Activated CD8-positive, alpha-beta T cell treated with anti-CD3 and anti-CD28 coated beads for 36 hours (primary cell): ENCODE measurements at regions of chr1 and their contacts with region 1.

Region 1: DNA sequence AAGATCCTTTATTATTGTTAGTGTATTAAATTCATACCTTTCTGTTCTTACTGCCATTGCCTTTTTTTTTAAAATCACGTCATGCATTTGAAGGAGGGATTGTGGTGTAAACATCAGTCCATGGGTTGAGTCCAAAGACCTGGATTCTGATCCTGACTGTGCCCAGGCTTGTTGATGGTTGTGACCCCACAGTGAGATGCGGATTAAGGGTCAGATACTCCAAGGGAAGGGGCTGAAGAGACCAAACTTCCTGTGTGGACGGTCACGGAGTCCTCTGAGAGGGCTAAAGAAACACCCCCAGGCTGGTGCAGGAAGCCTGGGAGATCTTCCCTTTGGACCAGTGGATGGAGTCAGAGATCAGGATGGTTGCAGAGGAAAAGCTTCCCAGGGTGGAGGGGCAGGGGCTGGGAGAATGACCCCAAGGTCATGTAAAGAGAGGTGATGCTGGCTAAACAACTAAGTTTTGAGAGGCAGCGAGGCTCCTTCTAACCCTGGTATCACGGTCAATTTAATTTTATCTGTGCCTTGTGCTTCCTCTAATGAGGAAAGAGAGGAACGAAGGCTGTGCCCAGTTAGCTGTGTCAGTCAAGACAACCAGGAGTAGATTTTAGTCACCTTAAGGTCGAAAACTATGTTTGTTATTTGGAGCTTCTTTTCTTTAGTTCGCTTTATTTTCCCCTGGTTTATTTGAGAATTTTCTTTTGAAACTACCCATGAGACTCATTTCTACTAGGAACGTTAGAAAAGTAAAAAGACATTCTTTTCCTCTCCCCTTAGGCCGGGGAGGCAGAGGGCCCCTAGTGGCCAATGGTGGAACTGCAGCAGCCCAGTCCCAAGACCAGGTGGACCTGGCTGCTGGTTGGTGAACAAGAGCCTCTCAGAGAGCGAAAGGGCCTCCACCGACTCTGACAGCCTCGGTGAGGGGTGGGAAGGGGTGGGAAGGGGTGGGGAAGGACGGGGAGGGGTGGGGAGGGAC is 8.7 kb upstream of the GPR161 start:
- DNase-seq: peak; percentile 91
- ATAC-seq: peak; percentile 100
- H3K4me3 Mint-ChIP-seq: peak overlapping the region; percentile 29
- H3K27ac Mint-ChIP-seq: no peak overlapping the region
- H3K4me1 Mint-ChIP-seq: peaks cover 9% of the 10 kb centered on the region
- H3K27me3 Mint-ChIP-seq: no peaks in the 10 kb centered on the region
- CTCF ChIP-seq: peak; percentile 93

Region 2: GRCh38 chr1:168161459-168161858 is 16.0 kb after region 1 on chr1:
- CTCF ChIA-PET with region 1: interaction called, 10 read pairs
- POLR2A ChIA-PET with region 1: no interaction called
- intact Hi-C with region 1: no loop called
- DNase-seq: no peak
- ATAC-seq: no peak
- H3K4me3 Mint-ChIP-seq: no peak overlapping the region
- H3K27ac Mint-ChIP-seq: no peak overlapping the region
- H3K4me1 Mint-ChIP-seq: peaks cover 2% of the 10 kb centered on the region
- H3K27me3 Mint-ChIP-seq: peaks cover 11% of the 10 kb centered on the region
- CTCF ChIP-seq: no peak

Region 3: DNA sequence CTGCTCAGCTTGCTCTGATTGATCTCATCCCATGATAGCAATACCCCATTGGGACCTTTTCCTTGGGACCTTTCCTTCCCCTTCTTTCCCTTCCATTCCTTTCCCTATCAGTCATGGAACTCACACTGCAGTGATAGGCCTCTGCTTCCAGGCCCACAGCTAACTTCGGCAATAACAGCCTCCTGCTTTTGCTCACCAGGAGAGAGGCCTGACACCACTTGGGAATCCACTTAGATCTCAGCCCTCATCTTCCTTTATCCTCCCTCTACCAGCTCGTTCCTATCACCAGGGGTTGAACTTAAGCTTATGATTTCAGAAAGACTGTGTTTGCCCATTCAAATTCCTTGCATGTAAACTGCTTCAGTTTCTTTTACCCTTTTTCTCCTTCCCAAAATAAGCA is 22.3 kb after region 1 on chr1:
- CTCF ChIA-PET with region 1: interaction called, 19 read pairs
- POLR2A ChIA-PET with region 1: no interaction called
- intact Hi-C with region 1: no loop called
- DNase-seq: no peak
- ATAC-seq: no peak
- H3K4me3 Mint-ChIP-seq: no peak overlapping the region
- H3K27ac Mint-ChIP-seq: no peak overlapping the region
- H3K4me1 Mint-ChIP-seq: no peaks in the 10 kb centered on the region
- H3K27me3 Mint-ChIP-seq: peaks cover 1% of the 10 kb centered on the region
- CTCF ChIP-seq: no peak

Region 4: DNA sequence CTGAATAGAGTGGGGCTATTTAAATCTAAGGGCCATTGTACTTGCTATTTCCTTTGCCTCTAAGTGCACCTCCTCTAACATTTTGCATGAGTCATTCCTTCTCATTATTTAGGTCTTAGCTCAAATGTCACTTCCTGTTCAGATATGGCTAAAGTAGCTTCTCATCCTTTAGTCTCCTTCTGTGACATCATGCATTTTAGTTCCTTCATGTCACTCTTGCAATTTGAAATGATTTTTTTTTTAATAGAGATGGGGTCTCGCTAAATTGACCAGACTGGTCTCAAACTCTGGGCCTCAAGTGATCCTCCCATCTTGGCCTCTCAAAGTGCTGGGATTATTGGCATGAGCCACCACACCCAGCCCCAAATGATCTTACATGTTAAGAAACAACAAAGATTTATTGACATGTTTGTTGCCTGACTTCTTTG is 141.8 kb after region 1 on chr1:
- CTCF ChIA-PET with region 1: no interaction called
- POLR2A ChIA-PET with region 1: no interaction called
- intact Hi-C with region 1: no loop called
- DNase-seq: no peak
- ATAC-seq: peak; percentile 98
- H3K4me3 Mint-ChIP-seq: no peak overlapping the region
- H3K27ac Mint-ChIP-seq: no peak overlapping the region
- H3K4me1 Mint-ChIP-seq: peaks cover 14% of the 10 kb centered on the region
- H3K27me3 Mint-ChIP-seq: no peaks in the 10 kb centered on the region
- CTCF ChIP-seq: no peak